ENCODE measurements at regions of chr19 and their contacts with region 1.

Region 1: GRCh38 chr19:40750059-40750873 is at the start of gene ACTMAP:
- DNase-seq: peak; percentile 100
- ATAC-seq: peak; percentile 88
- H3K4me3 ChIP-seq: peak within 1 kb of the TSS; percentile 86 to 98 (median 89)
- H3K4me3 Mint-ChIP-seq: peak within 1 kb of the TSS; percentile 93
- H3K27ac ChIP-seq: peak within 1 kb of the TSS; percentile 94 to 97
- H3K27ac Mint-ChIP-seq: peak within 1 kb of the TSS; percentile 95
- H3K4me1 ChIP-seq: peaks cover 29 to 54% of the 10 kb centered on the region in 2 donors
- H3K4me1 Mint-ChIP-seq: peaks cover 41% of the 10 kb centered on the region
- H3K27me3 ChIP-seq: no peaks in the 10 kb centered on the region
- H3K27me3 Mint-ChIP-seq: no peaks in the 10 kb centered on the region
- CTCF ChIP-seq: no peak
- total RNA-seq, gene ACTMAP: 9.8 and 10.2 TPM in 2 replicates

Region 2: DNA sequence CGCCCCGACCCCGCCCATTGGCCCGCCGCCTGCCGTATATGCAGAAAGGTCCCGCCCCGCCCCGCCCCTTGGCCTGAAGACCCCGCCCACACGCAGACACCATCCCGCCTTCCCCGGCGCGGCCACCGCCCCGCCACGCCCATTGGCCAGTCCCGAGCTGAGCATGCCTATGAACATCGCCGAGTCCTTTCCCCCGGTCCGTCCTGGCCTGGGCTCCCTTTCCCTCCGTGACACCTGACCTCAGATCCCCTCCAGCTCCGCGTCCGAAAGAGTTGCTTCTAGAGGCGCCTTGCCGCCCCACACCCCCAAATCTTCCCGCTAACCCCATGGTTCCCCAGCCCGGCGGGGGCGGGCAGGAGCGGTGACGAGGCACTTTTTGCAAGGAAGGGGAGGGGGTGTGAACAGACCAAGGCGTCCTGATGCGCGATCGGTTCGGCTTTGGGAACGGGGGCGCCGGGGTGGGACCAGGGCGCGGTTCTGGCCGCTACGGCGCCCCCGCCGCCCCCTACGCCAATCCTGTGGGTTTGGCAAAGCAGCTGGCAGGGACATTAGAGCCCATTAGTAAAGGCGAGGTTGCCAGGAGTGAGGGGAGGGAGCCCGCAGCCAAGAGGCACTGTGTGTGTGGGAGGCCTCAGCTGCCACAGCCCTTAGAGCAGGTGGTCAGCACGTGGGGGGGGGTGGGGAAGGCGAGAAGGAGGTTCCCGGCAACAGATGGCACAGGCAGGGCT is 59.4 kb before region 1 on chr19:
- CTCF ChIA-PET with region 1: no interaction called
- POLR2A ChIA-PET with region 1: interaction called, 3 read pairs
- intact Hi-C with region 1: loop called (anchors 1 kb)
- DNase-seq: peak; percentile 93
- ATAC-seq: peak; percentile 74
- H3K4me3 ChIP-seq: peak overlapping the region; percentile 26 to 87 (median 62)
- H3K4me3 Mint-ChIP-seq: peak overlapping the region; percentile 97
- H3K27ac ChIP-seq: peak overlapping the region in 1 of 2 donors; percentile 11
- H3K27ac Mint-ChIP-seq: peak overlapping the region; percentile 88
- H3K4me1 ChIP-seq: peaks cover 44 to 51% of the 10 kb centered on the region in 2 donors
- H3K4me1 Mint-ChIP-seq: peaks cover 13% of the 10 kb centered on the region
- H3K27me3 ChIP-seq: no peaks in the 10 kb centered on the region
- H3K27me3 Mint-ChIP-seq: no peaks in the 10 kb centered on the region
- CTCF ChIP-seq: no peak

Region 3: DNA sequence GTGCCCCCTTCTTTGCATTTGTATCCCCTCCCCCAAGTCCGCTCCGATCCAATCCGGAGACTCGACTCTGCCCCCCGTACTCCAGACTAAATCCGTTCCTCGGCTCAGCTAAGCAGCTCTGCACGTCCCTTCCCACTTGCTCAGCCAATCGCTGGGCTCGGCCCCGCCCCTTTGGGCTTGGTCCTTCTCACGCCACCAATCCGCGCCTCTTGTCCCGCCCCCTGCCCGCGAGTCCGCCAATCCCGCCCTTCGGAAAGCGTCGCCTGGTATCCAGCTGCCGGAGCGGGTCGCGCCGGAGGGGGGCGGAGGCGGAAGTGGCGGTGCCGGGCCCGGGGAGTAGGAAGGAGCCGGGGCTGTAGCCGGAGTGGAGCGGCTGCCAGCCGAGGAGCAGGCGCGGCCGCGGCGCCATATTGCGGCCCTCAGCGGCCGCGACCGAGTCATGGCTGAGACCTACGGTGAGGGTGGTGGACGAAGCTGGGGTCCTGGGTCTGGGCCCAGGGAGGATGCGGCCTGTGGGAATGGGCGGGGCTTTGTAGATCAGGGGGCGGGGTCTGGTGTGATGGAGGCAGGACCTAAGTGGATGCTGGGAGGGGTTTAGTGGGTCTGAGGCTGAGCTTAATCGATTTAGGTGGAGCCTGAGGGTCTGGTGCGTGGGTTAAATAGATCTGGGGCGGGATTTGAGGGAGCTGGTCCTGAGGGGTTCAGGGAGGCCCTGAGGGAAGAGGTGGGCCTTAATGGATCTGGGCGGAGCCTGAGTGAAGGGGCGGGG is 27.9 kb after region 1 on chr19 and contains the start of gene RAB4B:
- CTCF ChIA-PET with region 1: interaction called, 29 read pairs
- POLR2A ChIA-PET with region 1: interaction called, 99 read pairs
- intact Hi-C with region 1: loop called (anchors 1 kb)
- DNase-seq: peak; percentile 100
- ATAC-seq: peak; percentile 77
- H3K4me3 ChIP-seq: peak within 1 kb of the TSS; percentile 67 to 100 (median 87)
- H3K4me3 Mint-ChIP-seq: peak within 1 kb of the TSS; percentile 99
- H3K27ac ChIP-seq: peak within 1 kb of the TSS; percentile 97 to 99
- H3K27ac Mint-ChIP-seq: peak within 1 kb of the TSS; percentile 99
- H3K4me1 ChIP-seq: peaks cover 49 to 64% of the 10 kb centered on the region in 2 donors
- H3K4me1 Mint-ChIP-seq: peaks cover 64% of the 10 kb centered on the region
- H3K27me3 ChIP-seq: no peaks in the 10 kb centered on the region
- H3K27me3 Mint-ChIP-seq: no peaks in the 10 kb centered on the region
- CTCF ChIP-seq: no peak
- total RNA-seq, gene RAB4B: 104 and 108 TPM in 2 replicates

Region 4: GRCh38 chr19:40806488-40807468 is 56.5 kb after region 1 on chr19:
- CTCF ChIA-PET with region 1: interaction called, 14 read pairs
- POLR2A ChIA-PET with region 1: interaction called, 5 read pairs
- intact Hi-C with region 1: loop called (anchors 2 kb)
- DNase-seq: peak; percentile 73
- ATAC-seq: peak; percentile 15
- H3K4me3 ChIP-seq: no peak overlapping the region
- H3K4me3 Mint-ChIP-seq: peak overlapping the region; percentile 60
- H3K27ac ChIP-seq: peak overlapping the region; percentile 47 to 86
- H3K27ac Mint-ChIP-seq: peak overlapping the region; percentile 85
- H3K4me1 ChIP-seq: peaks cover 60 to 76% of the 10 kb centered on the region in 2 donors
- H3K4me1 Mint-ChIP-seq: peaks cover 81% of the 10 kb centered on the region
- H3K27me3 ChIP-seq: no peaks in the 10 kb centered on the region
- H3K27me3 Mint-ChIP-seq: no peaks in the 10 kb centered on the region
- CTCF ChIP-seq: peak; percentile 85

Region 5: DNA sequence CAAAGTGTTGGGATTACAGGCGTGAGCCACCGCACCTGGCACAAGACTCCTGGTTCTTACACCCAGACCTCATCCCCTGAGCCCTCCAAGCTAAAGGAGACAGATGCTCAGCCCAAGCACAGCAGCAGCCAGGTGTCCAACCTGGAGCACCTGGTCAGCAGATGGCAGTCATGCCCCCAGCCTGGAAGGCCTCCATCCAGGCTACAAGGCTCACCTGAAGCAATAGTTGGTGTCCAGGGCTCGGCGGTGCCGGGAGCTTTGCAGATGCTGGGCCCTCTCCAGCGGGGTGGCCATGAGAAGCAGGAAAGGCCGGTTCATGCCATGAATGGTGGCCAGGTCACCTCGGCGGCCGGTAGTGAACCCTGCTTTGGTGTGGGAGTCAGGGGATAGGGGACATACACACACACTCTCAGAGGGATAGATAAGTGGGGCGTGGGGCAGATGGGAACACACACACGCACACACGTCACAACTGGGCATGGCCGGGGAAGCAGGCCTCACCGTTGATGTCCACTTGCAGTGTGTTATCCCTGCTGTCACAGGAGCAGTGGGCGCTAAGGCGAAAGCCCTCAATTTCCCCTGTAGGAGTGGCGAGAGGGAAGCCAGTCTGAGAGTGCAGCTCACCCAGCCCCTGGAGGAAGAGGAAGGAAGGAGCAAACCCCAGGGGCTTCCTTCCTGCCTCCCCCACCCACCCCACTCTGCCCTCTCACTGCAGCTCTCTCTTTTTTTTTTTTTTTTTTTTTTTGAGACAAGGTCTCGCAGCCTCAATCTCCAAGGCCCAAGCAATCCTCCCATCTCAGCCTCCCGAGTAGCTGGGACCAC is 591.6 kb after region 1 on chr19:
- CTCF ChIA-PET with region 1: no interaction called
- POLR2A ChIA-PET with region 1: interaction called, 11 read pairs
- intact Hi-C with region 1: no loop called
- DNase-seq: no peak
- ATAC-seq: peak; percentile 43
- H3K4me3 ChIP-seq: peak overlapping the region in 1 of 5 experiments; percentile 21
- H3K4me3 Mint-ChIP-seq: no peak overlapping the region
- H3K27ac ChIP-seq: no peak overlapping the region
- H3K27ac Mint-ChIP-seq: peak overlapping the region; percentile 82
- H3K4me1 ChIP-seq: peaks cover 13 to 27% of the 10 kb centered on the region in 2 donors
- H3K4me1 Mint-ChIP-seq: peaks cover 36% of the 10 kb centered on the region
- H3K27me3 ChIP-seq: no peaks in the 10 kb centered on the region
- H3K27me3 Mint-ChIP-seq: no peaks in the 10 kb centered on the region
- CTCF ChIP-seq: no peak

Measured in B cell (primary cell).